ENCODE measurements at regions of chr1 and their contacts with region 1.

Region 1: DNA sequence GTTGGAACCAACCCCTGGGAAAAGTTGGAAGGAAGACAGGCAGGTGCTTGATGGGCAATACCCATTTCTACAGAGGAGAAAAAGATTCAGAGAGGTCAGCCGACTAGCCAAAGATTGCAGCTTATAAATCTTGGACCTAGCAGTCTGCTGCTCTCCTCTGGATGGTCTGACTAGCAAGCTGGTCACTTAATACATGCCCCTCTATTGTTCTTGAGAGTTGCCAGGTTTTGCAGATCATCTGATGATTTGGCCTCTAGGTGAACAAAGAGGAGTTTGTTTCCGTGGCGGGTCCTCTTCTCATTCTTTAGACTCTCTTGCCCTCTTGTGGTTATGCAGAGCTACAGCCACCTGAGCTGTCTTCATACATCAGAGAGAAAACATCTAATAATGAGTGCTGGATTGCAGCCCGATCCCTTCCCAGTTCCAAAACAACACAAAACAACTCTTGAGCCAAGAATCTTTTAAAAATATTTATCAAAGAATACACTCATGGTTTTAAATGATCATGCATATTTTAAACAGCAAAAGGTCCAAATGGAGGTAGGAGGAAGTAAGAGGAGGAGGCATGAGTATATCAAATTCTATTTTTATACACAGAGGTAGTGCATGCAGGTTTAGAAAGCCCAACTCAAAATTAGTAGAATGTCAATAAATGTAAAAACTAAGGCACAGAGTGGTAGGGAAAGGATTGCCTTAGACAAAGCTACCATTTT is 115.7 kb downstream of the SLC30A10 start:
- DNase-seq: no peak
- ATAC-seq: peak; percentile 86

Region 2: DNA sequence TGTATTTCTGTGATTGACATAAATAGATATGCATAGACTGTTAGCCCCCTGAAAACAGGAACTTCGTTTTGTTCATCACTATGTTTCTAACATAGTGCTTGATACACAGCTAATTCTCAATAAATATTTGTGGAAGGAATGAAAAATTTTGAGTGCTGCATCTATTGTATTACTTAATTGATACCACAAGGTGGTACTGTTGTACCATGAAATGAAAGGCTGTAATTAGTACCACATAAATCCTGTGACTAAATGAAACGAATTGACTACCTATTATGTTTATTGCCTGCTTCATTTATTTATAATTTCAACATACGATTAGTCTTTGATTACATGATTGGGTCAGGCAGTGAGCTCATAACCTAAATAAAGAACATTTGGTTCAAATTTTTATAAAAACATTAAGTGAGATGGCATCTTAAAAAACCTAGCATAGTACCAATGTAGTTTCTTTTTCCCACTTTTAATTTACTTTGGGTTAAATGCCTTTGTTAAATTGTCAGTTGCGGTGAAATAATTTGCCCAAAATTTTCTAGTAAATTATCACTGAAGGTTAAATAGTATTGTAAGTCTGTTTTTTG is 1482.5 kb before region 1 on chr1:
- intact Hi-C with region 1: loop called (anchors 10 kb)
- DNase-seq: no peak
- ATAC-seq: peak; percentile 25

Region 3: GRCh38 chr1:219576931-219577730 is 235.5 kb before region 1 on chr1:
- intact Hi-C with region 1: loop called (anchors 10 kb)
- DNase-seq: no peak
- ATAC-seq: no peak

Region 4: DNA sequence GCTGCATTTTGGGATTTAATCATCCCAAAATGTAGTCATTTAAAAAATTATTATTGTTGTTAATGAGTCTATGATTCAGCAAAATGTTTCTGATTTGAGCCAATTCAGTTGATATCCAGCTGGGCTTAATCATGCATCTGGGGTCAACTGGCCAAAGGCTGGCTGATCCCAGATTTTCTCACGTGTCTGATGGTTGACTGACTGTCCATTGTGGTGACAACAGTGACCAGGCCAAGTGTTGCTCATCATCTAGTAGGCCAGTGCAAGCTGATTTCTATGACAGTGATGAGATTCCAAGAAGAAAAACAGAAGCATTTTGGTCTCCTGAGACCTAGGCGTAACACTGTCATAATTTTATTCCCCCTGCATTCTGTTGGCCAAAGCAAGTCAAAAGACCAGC is 119.7 kb before region 1 on chr1:
- intact Hi-C with region 1: no loop called
- DNase-seq: no peak
- ATAC-seq: no peak

Measured in left ventricle myocardium superior (tissue), 1 donor.